A549 (cell line): ENCODE measurements at regions of chr10 and their contacts with region 1.

Region 1: GRCh38 chr10:71608819-71609768 is 110.5 kb downstream of the C10orf105 start:
- DNase-seq: peak; percentile 63 to 71
- ATAC-seq: peak; percentile 58 to 86
- H3K4me3 ChIP-seq: no peak overlapping the region
- H3K27ac ChIP-seq: no peak overlapping the region
- H3K4me1 ChIP-seq: peaks cover 12% of the 10 kb centered on the region; the same call in 2 of the 3 replicates
- CTCF ChIP-seq: peak; percentile 69
- EP300 ChIP-seq: no peak
- POLR2A ChIP-seq: no peak
- RAD21 ChIP-seq: peak; percentile 70 to 78

Region 2: GRCh38 chr10:71351628-71352319 is 257.3 kb before region 1 on chr10:
- CTCF ChIA-PET with region 1: interaction called, 13 read pairs
- POLR2A ChIA-PET with region 1: no interaction called
- DNase-seq: no peak
- ATAC-seq: no peak
- H3K4me3 ChIP-seq: no peak overlapping the region
- H3K27ac ChIP-seq: no peak overlapping the region
- H3K4me1 ChIP-seq: peaks cover 30% of the 10 kb centered on the region
- CTCF ChIP-seq: no peak
- EP300 ChIP-seq: no peak
- POLR2A ChIP-seq: no peak
- RAD21 ChIP-seq: no peak

Region 3: GRCh38 chr10:71396084-71396720 is 212.9 kb before region 1 on chr10:
- CTCF ChIA-PET with region 1: interaction called, 74 read pairs
- POLR2A ChIA-PET with region 1: no interaction called
- DNase-seq: peak; percentile 75 to 76
- ATAC-seq: peak; percentile 86 to 94
- H3K4me3 ChIP-seq: peak overlapping the region; percentile 58
- H3K27ac ChIP-seq: peak overlapping the region; percentile 71 to 91
- H3K4me1 ChIP-seq: peaks cover 7% of the 10 kb centered on the region; the same call in 1 of the 3 replicates
- CTCF ChIP-seq: peak; percentile 77
- EP300 ChIP-seq: no peak
- POLR2A ChIP-seq: no peak
- RAD21 ChIP-seq: peak; percentile 80 to 92

Region 4: DNA sequence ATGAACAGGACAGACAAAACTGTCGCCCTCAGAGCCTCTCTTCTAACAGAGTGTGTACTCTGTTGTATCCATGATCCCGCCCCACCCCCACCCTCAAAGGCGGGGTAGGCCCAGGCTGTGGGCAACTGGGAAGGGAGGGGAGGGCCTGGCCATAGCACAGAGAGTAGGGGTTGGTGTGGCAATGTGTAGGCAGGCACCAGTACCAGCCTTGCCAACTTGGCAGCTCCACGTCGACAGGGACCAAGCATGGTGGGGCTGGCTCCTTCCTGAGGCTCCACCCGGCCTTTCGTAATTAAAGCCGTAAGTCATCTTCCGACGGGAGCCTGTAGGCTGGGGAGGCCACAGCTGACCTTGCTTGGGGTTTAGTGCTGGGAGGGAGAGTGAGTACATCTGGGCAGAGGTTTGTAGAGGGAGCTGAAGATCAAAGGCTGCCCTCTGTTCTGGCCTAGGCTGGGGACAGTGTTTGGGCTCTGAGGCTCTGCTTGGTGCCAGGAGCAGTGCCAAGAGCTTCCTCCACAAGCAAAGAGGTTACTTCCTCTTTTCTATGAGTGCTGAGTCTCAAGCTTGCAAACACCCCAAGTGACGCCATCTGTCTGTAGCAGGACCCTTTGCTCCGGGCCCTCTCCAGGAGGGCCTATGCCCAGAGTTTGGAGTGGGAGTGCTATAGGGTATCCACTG is 11.1 kb before region 1 on chr10:
- CTCF ChIA-PET with region 1: interaction called, 37 read pairs
- POLR2A ChIA-PET with region 1: no interaction called
- DNase-seq: no peak
- ATAC-seq: peak; percentile 21 to 33; a peak in 3 of 6 replicates
- H3K4me3 ChIP-seq: no peak overlapping the region
- H3K27ac ChIP-seq: peak overlapping the region in 1 of 2 experiments; percentile 51; a peak in 2 of 6 replicates
- H3K4me1 ChIP-seq: peaks cover 15% of the 10 kb centered on the region; the same call in 1 of the 3 replicates
- CTCF ChIP-seq: no peak
- EP300 ChIP-seq: no peak
- POLR2A ChIP-seq: no peak
- RAD21 ChIP-seq: no peak